ENCODE measurements at regions of chr16 and their contacts with region 1.

Region 1: GRCh38 chr16:87059994-87060986 is 256.9 kb downstream of the C16orf95 start:
- DNase-seq: no peak
- CTCF ChIP-seq: no peak

Region 2: DNA sequence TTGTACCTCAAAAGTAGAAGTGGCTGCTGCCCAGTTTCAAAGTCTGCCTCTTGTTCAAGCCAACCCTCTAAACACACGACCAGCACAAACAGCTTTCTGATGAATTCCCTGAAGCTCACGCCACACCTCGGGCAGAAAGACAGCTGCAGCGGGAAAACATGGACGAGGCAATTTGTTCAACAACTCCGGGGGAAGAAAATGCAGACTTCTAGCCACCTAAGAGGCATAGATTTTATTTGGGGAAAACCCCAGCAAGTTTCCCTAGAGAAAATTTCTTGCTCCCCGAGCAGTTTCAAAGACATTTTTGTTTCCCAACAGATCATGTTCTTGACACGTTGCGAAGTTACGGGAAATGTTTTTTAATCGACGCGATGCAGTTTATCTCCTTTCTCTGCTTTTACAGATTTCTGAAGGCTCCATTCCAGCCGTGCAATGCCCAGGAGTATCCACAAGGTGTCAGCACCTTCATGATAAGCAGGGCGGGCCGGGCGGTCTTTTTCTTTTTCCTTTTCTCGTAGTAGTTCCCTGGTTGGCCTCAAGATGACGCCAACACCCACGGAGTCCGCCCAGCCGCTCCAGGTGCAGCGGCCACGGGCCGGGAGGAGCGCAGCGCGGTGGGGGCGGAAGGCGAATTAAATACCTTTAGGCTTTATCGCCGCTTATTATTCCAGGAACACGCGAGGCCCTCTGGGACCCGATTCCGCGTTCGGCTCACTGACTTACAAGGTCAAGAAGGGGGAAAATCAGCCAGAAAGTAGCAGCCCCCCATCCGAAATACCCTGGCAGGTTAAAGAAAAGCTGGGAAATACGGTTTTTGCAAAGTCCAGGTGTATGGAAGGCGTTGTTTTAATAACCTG is 496.6 kb before region 1 on chr16:
- in situ Hi-C with region 1: loop called (anchors 10 kb)
- DNase-seq: peak; percentile 91
- CTCF ChIP-seq: peak; percentile 97

Measured in GM13976 (cell line).